Heart right ventricle (tissue), 16 donors: ENCODE measurements at regions of chr6 and their contacts with region 1.

Region 1: DNA sequence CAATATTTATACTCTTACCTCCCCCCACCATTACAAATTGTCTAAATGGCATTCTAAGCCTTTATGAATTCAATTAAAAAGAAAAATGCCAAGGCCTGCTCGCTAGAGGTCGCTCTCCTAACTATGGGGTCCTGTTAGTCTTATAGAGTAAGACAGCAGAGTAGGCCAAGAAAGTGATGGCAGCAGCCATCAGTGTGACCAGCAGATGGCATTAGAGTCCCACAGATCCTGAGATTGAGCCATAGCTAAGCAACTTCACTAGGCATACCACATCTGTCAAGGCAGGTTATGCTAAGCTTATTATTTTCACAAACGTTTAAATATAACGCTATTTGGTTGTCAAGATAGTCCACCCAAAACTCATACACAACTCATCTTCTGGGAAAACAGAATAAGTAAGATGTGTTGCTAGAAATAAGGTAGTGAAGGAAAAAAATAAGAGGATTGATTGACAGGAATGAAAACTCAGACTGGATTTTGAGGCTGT is 57.6 kb upstream of the SCAF8 start:
- DNase-seq: peak; percentile 64 to 89
- ATAC-seq: peak; percentile 96 to 99 (median 98)
- H3K4me3 ChIP-seq: no peak overlapping the region
- H3K27ac ChIP-seq: no peak overlapping the region
- H3K4me1 ChIP-seq: no peaks in the 10 kb centered on the region
- H3K27me3 ChIP-seq: no peaks in the 10 kb centered on the region
- CTCF ChIP-seq: peak; percentile 98 to 100 (median 99)

Region 2: DNA sequence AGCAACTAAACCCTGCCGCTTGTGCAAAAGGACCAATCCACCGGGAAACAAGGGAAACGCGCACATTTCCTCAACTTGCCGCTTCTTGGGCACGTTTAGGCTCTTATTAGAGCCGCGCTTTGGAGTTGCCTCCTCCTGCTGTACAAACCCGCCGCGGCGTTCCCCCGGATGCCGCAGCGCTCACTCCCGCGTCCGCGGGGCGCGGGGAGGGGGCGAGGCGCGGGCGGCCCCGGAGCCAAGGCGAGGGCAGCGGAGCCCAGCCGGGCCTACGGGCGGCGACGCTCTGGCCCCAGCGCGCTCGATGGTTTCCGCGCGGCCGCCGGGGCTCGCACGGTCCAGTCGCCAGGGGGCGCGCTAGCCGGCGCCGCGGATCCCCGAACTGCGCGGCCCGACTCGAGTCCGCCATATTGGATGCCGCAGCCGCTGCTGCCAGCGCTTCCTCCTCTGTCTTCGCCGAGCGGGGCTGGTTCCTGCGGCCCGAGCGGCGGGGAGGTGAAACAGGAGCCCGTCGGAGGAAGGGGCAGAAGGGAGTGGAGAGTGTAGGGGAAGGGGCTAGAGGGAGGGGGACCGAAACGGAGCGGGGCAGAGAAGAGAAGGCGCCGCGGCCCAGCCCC is 57.5 kb after region 1 on chr6 and contains the start of gene SCAF8:
- intact Hi-C with region 1: loop called in 1 of 10 experiments (anchors 5 kb)
- DNase-seq: peak; percentile 79 to 85
- ATAC-seq: peak; percentile 75 to 94 (median 90)
- H3K4me3 ChIP-seq: peak within 1 kb of the TSS; percentile 93 to 99 (median 98)
- H3K27ac ChIP-seq: peak within 1 kb of the TSS; percentile 99 to 100 (median 100)
- H3K4me1 ChIP-seq: peaks cover 5 to 50% (median 46%) of the 10 kb centered on the region in 9 donors
- H3K27me3 ChIP-seq: no peaks in the 10 kb centered on the region
- CTCF ChIP-seq: peak; percentile 69 to 95 (median 86)
- total RNA-seq, gene SCAF8: 43.0 to 96.1 (median 73.6) TPM

Region 3: GRCh38 chr6:154805288-154805911 is 129.8 kb after region 1 on chr6:
- intact Hi-C with region 1: loop called (anchors 1 to 10 kb)
- DNase-seq: no peak
- ATAC-seq: peak in 2 of 8 donors; percentile 44 to 57
- H3K4me3 ChIP-seq: no peak overlapping the region
- H3K27ac ChIP-seq: no peak overlapping the region
- H3K4me1 ChIP-seq: peaks cover 0 to 7% (median 0%) of the 10 kb centered on the region in 9 donors
- H3K27me3 ChIP-seq: no peaks in the 10 kb centered on the region
- CTCF ChIP-seq: peak in 8 of 9 donors; percentile 22 to 75 (median 58)

Region 4: DNA sequence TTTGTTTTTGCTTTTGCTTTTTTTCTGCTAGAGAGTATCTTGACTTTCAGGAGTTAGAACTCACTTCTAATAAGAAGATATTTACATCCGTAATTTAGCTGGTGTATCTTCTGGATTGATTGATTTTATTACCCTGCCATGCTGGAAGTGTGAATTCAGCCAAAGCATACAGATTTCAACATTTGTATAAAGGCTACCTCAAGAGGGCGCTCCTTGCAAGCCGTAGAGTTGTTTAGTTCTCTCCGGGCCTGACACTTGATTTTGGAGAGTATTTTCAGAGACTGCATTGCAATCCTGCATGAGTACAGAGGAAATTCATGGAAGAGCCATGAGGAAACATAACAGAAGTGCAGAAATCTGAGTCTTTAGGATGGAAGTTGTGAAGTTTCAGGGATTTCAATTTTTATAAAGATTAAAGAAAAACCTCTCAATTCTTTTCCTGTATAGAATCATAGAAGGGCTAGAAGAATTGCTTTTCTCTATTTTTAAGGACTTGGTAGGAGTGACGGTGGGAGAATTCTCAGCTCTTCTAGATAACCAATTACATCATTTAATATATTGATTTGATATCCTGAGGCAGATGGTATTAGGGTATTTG is 252.8 kb after region 1 on chr6:
- intact Hi-C with region 1: loop called in 1 of 10 experiments (anchors 10 kb)
- DNase-seq: peak in 1 of 2 donors; percentile 58
- ATAC-seq: peak in 6 of 8 donors; percentile 49 to 71 (median 64)
- H3K4me3 ChIP-seq: no peak overlapping the region
- H3K27ac ChIP-seq: no peak overlapping the region
- H3K4me1 ChIP-seq: peaks cover 0 to 29% (median 9%) of the 10 kb centered on the region in 9 donors
- H3K27me3 ChIP-seq: no peaks in the 10 kb centered on the region
- CTCF ChIP-seq: peak; percentile 55 to 88 (median 80)